Calu3 (cell line): ENCODE measurements at regions of chr15 and their contacts with region 1.

Region 1: DNA sequence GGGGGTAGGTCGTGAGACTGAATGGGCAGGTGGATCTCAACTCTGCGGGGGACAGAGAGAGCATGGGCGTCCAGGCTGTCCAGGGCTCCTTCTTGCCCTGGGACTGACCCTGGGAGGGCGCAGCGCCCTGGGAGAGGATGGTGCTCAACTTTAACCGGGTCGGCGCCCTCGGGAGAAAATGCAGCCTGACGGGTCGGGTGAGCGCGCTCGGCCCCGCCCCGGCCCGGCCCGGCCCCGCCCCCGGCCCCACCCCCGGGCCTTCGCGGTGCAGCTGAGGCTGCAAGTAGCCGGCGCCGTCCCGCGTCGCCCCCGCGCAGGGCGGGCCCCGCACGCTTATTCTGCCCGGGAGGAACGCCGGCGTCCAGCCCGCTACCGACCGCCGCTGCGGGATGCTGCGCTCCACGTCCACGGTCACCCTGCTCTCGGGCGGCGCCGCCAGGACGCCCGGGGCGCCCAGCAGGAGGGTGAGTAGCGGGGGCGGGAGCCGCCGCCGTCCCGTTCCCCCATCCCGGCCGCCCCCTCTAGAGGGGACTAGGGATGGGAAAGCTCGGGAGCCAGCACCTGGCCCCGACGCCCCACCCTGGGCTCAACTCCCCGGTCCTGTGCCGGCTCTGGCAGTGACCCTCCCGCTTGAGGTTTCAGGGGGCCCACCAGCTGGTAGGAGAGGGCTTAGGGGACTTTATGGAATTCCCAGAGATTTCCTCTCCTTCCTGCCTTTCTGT is at the start of gene MYZAP:
- DNase-seq: peak; percentile 83
- H3K4me3 Mint-ChIP-seq: peak within 1 kb of the TSS; percentile 84
- H3K27ac Mint-ChIP-seq: peak within 1 kb of the TSS; percentile 69
- H3K4me1 Mint-ChIP-seq: peaks cover 47% of the 10 kb centered on the region
- H3K27me3 Mint-ChIP-seq: no peaks in the 10 kb centered on the region
- CTCF ChIP-seq: no peak
- total RNA-seq, gene MYZAP: 5.1 and 6.9 TPM in 2 replicates

Region 2: GRCh38 chr15:57611938-57612337 is 20.1 kb after region 1 on chr15:
- CTCF ChIA-PET with region 1: interaction called, 6 read pairs
- intact Hi-C with region 1: loop called (anchors 2 kb)
- DNase-seq: peak; percentile 85
- H3K4me3 Mint-ChIP-seq: no peak overlapping the region
- H3K27ac Mint-ChIP-seq: peak overlapping the region; percentile 38
- H3K4me1 Mint-ChIP-seq: peaks cover 66% of the 10 kb centered on the region
- H3K27me3 Mint-ChIP-seq: no peaks in the 10 kb centered on the region
- CTCF ChIP-seq: peak; percentile 61